ENCODE measurements at regions of chrX and their contacts with region 1.

Region 1: DNA sequence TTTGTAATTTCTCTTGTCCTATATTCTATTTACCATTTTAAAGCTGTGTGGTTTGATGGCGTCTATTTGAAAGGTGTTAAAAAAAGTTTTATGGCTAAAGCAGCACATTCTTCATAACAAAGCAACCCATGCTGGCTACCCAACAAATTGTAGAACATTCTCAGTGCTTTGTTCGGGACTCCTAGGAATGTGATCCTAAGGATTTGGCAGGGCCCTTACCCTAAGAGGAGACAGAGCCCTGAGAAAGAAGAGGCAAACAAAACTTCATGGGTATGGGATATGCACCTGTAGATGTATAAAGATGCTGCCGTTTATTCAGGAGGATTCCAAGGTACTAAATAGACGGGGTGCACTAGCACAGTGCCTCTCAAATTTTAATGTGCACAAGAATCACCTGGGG is 370.8 kb upstream of the DIPK2B start:
- DNase-seq: no peak
- H3K4me3 ChIP-seq: no peak overlapping the region
- H3K27ac ChIP-seq: no peak overlapping the region
- H3K4me1 ChIP-seq: no peaks in the 10 kb centered on the region
- H3K27me3 ChIP-seq: no peaks in the 10 kb centered on the region
- CTCF ChIP-seq: no peak

Region 2: DNA sequence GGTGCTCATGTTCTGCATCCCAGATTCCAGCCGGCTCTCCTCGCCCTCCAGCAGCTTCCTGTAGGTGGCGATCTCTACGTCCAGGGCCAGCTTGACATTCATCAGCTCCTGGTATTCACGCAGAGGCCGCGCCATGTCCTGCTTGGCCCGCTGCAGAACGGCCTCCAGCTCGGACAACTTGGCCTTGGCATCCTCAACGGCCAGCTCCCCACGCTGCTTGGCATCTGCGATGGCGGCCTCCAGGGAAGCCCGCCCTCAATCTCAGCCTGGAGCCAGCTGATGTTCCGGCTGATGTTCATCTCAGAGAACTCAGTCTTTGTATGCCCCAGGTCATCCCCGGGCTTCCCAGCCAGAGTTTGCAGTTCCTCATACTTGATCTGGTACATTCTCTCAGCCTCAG is 61.1 kb after region 1 on chrX:
- CTCF ChIA-PET with region 1: no interaction called
- POLR2A ChIA-PET with region 1: no interaction called
- intact Hi-C with region 1: loop called (anchors 10 kb)
- DNase-seq: no peak
- H3K4me3 ChIP-seq: no peak overlapping the region
- H3K27ac ChIP-seq: no peak overlapping the region
- H3K4me1 ChIP-seq: no peaks in the 10 kb centered on the region
- H3K27me3 ChIP-seq: no peaks in the 10 kb centered on the region
- CTCF ChIP-seq: no peak; the same call in 1 of the 2 replicates

Region 3: DNA sequence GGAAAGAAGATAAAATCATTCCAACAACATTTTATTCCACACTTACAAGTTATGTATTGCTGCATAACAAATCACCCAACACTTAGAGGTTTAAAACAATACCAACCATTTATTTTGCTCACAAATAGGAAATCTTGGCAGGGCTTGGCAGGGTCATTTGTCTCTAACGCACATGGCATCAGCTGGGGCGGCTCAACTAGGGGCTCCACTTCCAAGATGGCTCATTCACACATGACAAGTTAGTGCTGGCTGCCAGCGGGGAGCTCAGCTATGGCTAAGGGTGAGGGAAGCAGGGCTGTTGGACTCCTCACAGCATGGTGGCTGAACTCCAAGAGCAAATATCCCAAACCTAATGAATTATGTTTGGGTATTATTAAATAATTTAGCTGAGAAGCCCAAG is 596.8 kb after region 1 on chrX:
- CTCF ChIA-PET with region 1: no interaction called
- POLR2A ChIA-PET with region 1: no interaction called
- intact Hi-C with region 1: no loop called
- DNase-seq: no peak
- H3K4me3 ChIP-seq: no peak overlapping the region
- H3K27ac ChIP-seq: no peak overlapping the region
- H3K4me1 ChIP-seq: no peaks in the 10 kb centered on the region
- H3K27me3 ChIP-seq: no peaks in the 10 kb centered on the region
- CTCF ChIP-seq: no peak

Measured in A673 (cell line).